CD4-positive, alpha-beta T cell (primary cell): ENCODE measurements at regions of chr2 and their contacts with region 1.

Region 1: GRCh38 chr2:84865181-84865783 is 15.6 kb downstream of the TRABD2A start:
- DNase-seq: peak in 5 of 14 experiments; percentile 15 to 73 (median 71)
- ATAC-seq: peak; percentile 65
- H3K4me3 ChIP-seq: no peak overlapping the region
- H3K4me3 Mint-ChIP-seq: peak overlapping the region; percentile 42
- H3K27ac ChIP-seq: peak overlapping the region in 1 of 2 donors; percentile 36
- H3K27ac Mint-ChIP-seq: peak overlapping the region; percentile 94
- H3K4me1 ChIP-seq: peaks cover 70% of the 10 kb centered on the region
- H3K4me1 Mint-ChIP-seq: peaks cover 97% of the 10 kb centered on the region
- H3K27me3 ChIP-seq: no peaks in the 10 kb centered on the region
- H3K27me3 Mint-ChIP-seq: no peaks in the 10 kb centered on the region
- CTCF ChIP-seq: peak; percentile 75

Region 2: GRCh38 chr2:84516234-84516986 is 348.9 kb before region 1 on chr2 and contains the start of gene DNAH6:
- CTCF ChIA-PET with region 1: interaction called, 3 read pairs
- POLR2A ChIA-PET with region 1: no interaction called
- intact Hi-C with region 1: loop called in 1 of 2 experiments (anchors 5 kb)
- DNase-seq: peak; percentile 78 to 96 (median 82)
- ATAC-seq: peak; percentile 98
- H3K4me3 ChIP-seq: peak within 1 kb of the TSS; percentile 64
- H3K4me3 Mint-ChIP-seq: peak within 1 kb of the TSS; percentile 90
- H3K27ac ChIP-seq: peak within 1 kb of the TSS; percentile 14 to 26
- H3K27ac Mint-ChIP-seq: peak within 1 kb of the TSS; percentile 73
- H3K4me1 ChIP-seq: peaks cover 13% of the 10 kb centered on the region
- H3K4me1 Mint-ChIP-seq: peaks cover 23% of the 10 kb centered on the region
- H3K27me3 ChIP-seq: no peaks in the 10 kb centered on the region
- H3K27me3 Mint-ChIP-seq: no peaks in the 10 kb centered on the region
- CTCF ChIP-seq: no peak
- total RNA-seq, gene DNAH6: 0.59 to 1.2 TPM

Region 3: GRCh38 chr2:84694088-84694622 is 171.1 kb before region 1 on chr2:
- CTCF ChIA-PET with region 1: no interaction called
- POLR2A ChIA-PET with region 1: no interaction called
- intact Hi-C with region 1: loop called in 1 of 2 experiments (anchors 5 kb)
- DNase-seq: peak in 12 of 14 experiments; percentile 1 to 83 (median 20)
- ATAC-seq: peak; percentile 91
- H3K4me3 ChIP-seq: peak overlapping the region; percentile 15
- H3K4me3 Mint-ChIP-seq: peak overlapping the region; percentile 49
- H3K27ac ChIP-seq: peak overlapping the region; percentile 30 to 70
- H3K27ac Mint-ChIP-seq: peak overlapping the region; percentile 81
- H3K4me1 ChIP-seq: peaks cover 15% of the 10 kb centered on the region
- H3K4me1 Mint-ChIP-seq: peaks cover 63% of the 10 kb centered on the region
- H3K27me3 ChIP-seq: no peaks in the 10 kb centered on the region
- H3K27me3 Mint-ChIP-seq: no peaks in the 10 kb centered on the region
- CTCF ChIP-seq: no peak

Region 4: GRCh38 chr2:84832772-84833461 is 32.4 kb before region 1 on chr2:
- CTCF ChIA-PET with region 1: no interaction called
- POLR2A ChIA-PET with region 1: interaction called, 13 read pairs
- intact Hi-C with region 1: loop called in 1 of 2 experiments (anchors 5 kb)
- DNase-seq: peak in 4 of 14 experiments; percentile 56 to 65 (median 64)
- ATAC-seq: peak; percentile 61
- H3K4me3 ChIP-seq: peak overlapping the region; percentile 44
- H3K4me3 Mint-ChIP-seq: peak overlapping the region; percentile 80
- H3K27ac ChIP-seq: peak overlapping the region; percentile 68 to 71
- H3K27ac Mint-ChIP-seq: no peak overlapping the region
- H3K4me1 ChIP-seq: peaks cover 68% of the 10 kb centered on the region
- H3K4me1 Mint-ChIP-seq: peaks cover 45% of the 10 kb centered on the region
- H3K27me3 ChIP-seq: no peaks in the 10 kb centered on the region
- H3K27me3 Mint-ChIP-seq: no peaks in the 10 kb centered on the region
- CTCF ChIP-seq: no peak

Region 5: GRCh38 chr2:84881581-84882414 is 16.5 kb after region 1 on chr2:
- CTCF ChIA-PET with region 1: interaction called, 6 read pairs
- POLR2A ChIA-PET with region 1: interaction called, 28 read pairs
- intact Hi-C with region 1: no loop called
- DNase-seq: peak; percentile 79 to 92 (median 86)
- ATAC-seq: peak; percentile 66
- H3K4me3 ChIP-seq: peak overlapping the region; percentile 91
- H3K4me3 Mint-ChIP-seq: peak overlapping the region; percentile 98
- H3K27ac ChIP-seq: peak overlapping the region; percentile 64 to 79
- H3K27ac Mint-ChIP-seq: peak overlapping the region; percentile 92
- H3K4me1 ChIP-seq: peaks cover 35% of the 10 kb centered on the region
- H3K4me1 Mint-ChIP-seq: peaks cover 55% of the 10 kb centered on the region
- H3K27me3 ChIP-seq: no peaks in the 10 kb centered on the region
- H3K27me3 Mint-ChIP-seq: no peaks in the 10 kb centered on the region
- CTCF ChIP-seq: peak; percentile 79